ENCODE measurements at regions of chr12 and their contacts with region 1.

Region 1: GRCh38 chr12:120686690-120687577 is at the start of gene MLEC:
- DNase-seq: peak; percentile 98 to 100 (median 100)
- ATAC-seq: peak; percentile 92
- H3K4me3 ChIP-seq: peak within 1 kb of the TSS; percentile 91
- H3K27ac ChIP-seq: peak within 1 kb of the TSS; percentile 91
- H3K4me1 ChIP-seq: peaks cover 14 to 17% of the 10 kb centered on the region in 2 experiments; a peak in 3 of 5 replicates
- H3K27me3 ChIP-seq: no peaks in the 10 kb centered on the region
- CTCF ChIP-seq: peak; percentile 26 to 65 (median 52); a peak in 4 of 6 replicates
- EP300 ChIP-seq: peak; percentile 70
- POLR2A ChIP-seq: peak; percentile 80
- RAD21 ChIP-seq: peak; percentile 49 to 65
- polyA plus RNA-seq, gene MLEC: 18.5 to 20.5 TPM

Region 2: GRCh38 chr12:120534203-120534702 is 152.7 kb before region 1 on chr12 and contains the start of gene RNF10:
- CTCF ChIA-PET with region 1: no interaction called
- POLR2A ChIA-PET with region 1: no interaction called
- in situ Hi-C with region 1: no loop called
- intact Hi-C with region 1: no loop called
- DNase-seq: peak; percentile 87 to 94 (median 91)
- ATAC-seq: peak; percentile 81
- H3K4me3 ChIP-seq: peak within 1 kb of the TSS; percentile 99
- H3K27ac ChIP-seq: peak within 1 kb of the TSS; percentile 90
- H3K4me1 ChIP-seq: peaks cover 27 to 35% of the 10 kb centered on the region in 2 experiments
- H3K27me3 ChIP-seq: no peaks in the 10 kb centered on the region
- CTCF ChIP-seq: no peak
- EP300 ChIP-seq: no peak
- POLR2A ChIP-seq: peak; percentile 94
- RAD21 ChIP-seq: no peak
- polyA plus RNA-seq, gene RNF10: 55.4 to 78.1 TPM

Region 3: GRCh38 chr12:120649442-120650232 is 37.3 kb before region 1 on chr12:
- CTCF ChIA-PET with region 1: no interaction called
- POLR2A ChIA-PET with region 1: interaction called, 4 read pairs
- in situ Hi-C with region 1: no loop called
- intact Hi-C with region 1: loop called (anchors 1 kb)
- DNase-seq: no peak
- ATAC-seq: 0 out of 3 replicates have a peak, but pooled peaks have one; percentile 10
- H3K4me3 ChIP-seq: no peak overlapping the region
- H3K27ac ChIP-seq: no peak overlapping the region
- H3K4me1 ChIP-seq: peaks cover 3 to 6% of the 10 kb centered on the region in 2 experiments; a peak in 2 of 5 replicates
- H3K27me3 ChIP-seq: peaks cover 29 to 54% of the 10 kb centered on the region in 2 experiments
- CTCF ChIP-seq: peak in 1 of 3 experiments; percentile 9; a peak in 1 of 6 replicates
- EP300 ChIP-seq: no peak
- POLR2A ChIP-seq: no peak
- RAD21 ChIP-seq: no peak

Region 4: DNA sequence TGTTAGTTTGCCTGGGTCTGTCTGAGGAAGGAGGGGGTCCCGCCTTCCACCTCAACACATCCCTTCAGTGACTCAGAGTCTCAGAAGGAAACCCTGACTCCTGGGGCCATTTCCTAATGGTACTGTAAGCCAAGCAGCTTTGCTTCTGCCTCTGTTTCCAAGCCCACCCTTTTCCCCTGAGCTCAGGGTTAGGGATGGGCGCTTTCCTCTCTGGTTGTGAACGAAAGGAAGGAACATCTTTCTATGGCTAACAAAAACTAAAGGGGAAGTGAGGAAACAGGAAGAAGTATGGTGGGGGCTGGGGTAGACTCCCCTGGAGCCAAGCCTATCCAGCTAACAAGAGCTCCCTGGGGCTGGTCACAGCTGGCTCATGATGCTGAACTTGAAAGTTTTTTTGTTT is 11.7 kb after region 1 on chr12:
- CTCF ChIA-PET with region 1: no interaction called
- POLR2A ChIA-PET with region 1: interaction called, 10 read pairs
- in situ Hi-C with region 1: no loop called
- intact Hi-C with region 1: no loop called
- DNase-seq: no peak
- ATAC-seq: no peak
- H3K4me3 ChIP-seq: no peak overlapping the region
- H3K27ac ChIP-seq: no peak overlapping the region
- H3K4me1 ChIP-seq: no peaks in the 10 kb centered on the region
- H3K27me3 ChIP-seq: no peaks in the 10 kb centered on the region
- CTCF ChIP-seq: no peak
- EP300 ChIP-seq: no peak
- POLR2A ChIP-seq: no peak
- RAD21 ChIP-seq: no peak

Measured in K562 (cell line).